MCF 10A (cell line): ENCODE measurements at regions of chr3 and their contacts with region 1.

Region 1: GRCh38 chr3:45688882-45689756 is at the start of gene SACM1L:
- DNase-seq: peak; percentile 98
- H3K4me3 Mint-ChIP-seq: peak within 1 kb of the TSS; percentile 74
- H3K27ac Mint-ChIP-seq: peak within 1 kb of the TSS; percentile 30
- H3K4me1 Mint-ChIP-seq: peaks cover 25% of the 10 kb centered on the region
- H3K27me3 Mint-ChIP-seq: no peaks in the 10 kb centered on the region
- CTCF ChIP-seq: no peak
- total RNA-seq, gene SACM1L: 39.3 and 44.5 TPM in 2 replicates

Region 2: GRCh38 chr3:45665101-45665572 is 24.0 kb before region 1 on chr3:
- CTCF ChIA-PET with region 1: interaction called, 11 read pairs
- POLR2A ChIA-PET with region 1: interaction called, 27 read pairs
- intact Hi-C with region 1: loop called (anchors 2 kb)
- DNase-seq: peak; percentile 81
- H3K4me3 Mint-ChIP-seq: no peak overlapping the region
- H3K27ac Mint-ChIP-seq: peak overlapping the region; percentile 50
- H3K4me1 Mint-ChIP-seq: peaks cover 22% of the 10 kb centered on the region
- H3K27me3 Mint-ChIP-seq: no peaks in the 10 kb centered on the region
- CTCF ChIP-seq: peak; percentile 39

Region 3: GRCh38 chr3:45677033-45677433 is 12.1 kb before region 1 on chr3:
- CTCF ChIA-PET with region 1: interaction called, 6 read pairs
- POLR2A ChIA-PET with region 1: interaction called, 73 read pairs
- intact Hi-C with region 1: loop called (anchors 1 kb)
- DNase-seq: peak; percentile 92
- H3K4me3 Mint-ChIP-seq: peak overlapping the region; percentile 50
- H3K27ac Mint-ChIP-seq: peak overlapping the region; percentile 83
- H3K4me1 Mint-ChIP-seq: peaks cover 18% of the 10 kb centered on the region
- H3K27me3 Mint-ChIP-seq: no peaks in the 10 kb centered on the region
- CTCF ChIP-seq: no peak

Region 4: DNA sequence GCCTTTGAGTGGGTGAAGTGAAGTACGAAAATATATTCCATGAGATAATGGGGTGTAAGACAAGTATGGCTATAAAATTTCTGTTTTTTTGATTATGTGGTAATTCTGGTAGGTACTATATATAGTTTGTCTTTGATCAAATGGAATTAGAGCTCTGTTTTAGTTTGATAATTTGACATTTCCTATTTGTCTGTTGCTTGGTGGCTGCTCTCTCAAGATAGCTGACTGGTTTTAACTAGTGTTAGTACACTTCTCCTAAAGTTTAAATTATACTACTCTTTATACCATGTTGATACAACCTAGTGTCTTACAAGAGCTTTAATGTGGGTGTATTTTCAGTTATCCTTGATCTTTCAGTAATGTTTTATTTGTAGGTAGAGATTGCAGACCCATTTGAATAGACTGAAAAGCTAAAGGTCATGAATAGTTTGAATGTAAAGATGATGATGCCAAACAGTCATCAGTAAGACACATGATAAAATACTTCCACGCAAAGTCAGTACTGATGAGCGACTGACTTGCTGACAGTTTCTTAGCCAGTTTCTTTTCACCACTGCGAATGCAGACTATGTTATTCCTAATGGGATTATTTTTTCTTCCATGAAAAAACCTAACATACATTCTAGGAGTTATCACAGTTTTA is 15.3 kb after region 1 on chr3:
- CTCF ChIA-PET with region 1: interaction called, 5 read pairs
- POLR2A ChIA-PET with region 1: interaction called, 13 read pairs
- intact Hi-C with region 1: no loop called
- DNase-seq: no peak
- H3K4me3 Mint-ChIP-seq: no peak overlapping the region
- H3K27ac Mint-ChIP-seq: no peak overlapping the region
- H3K4me1 Mint-ChIP-seq: peaks cover 10% of the 10 kb centered on the region
- H3K27me3 Mint-ChIP-seq: no peaks in the 10 kb centered on the region
- CTCF ChIP-seq: no peak

Region 5: GRCh38 chr3:45817831-45818522 is 128.9 kb after region 1 on chr3:
- CTCF ChIA-PET with region 1: no interaction called
- POLR2A ChIA-PET with region 1: interaction called, 18 read pairs
- intact Hi-C with region 1: no loop called
- DNase-seq: peak; percentile 97
- H3K4me3 Mint-ChIP-seq: no peak overlapping the region
- H3K27ac Mint-ChIP-seq: peak overlapping the region; percentile 73
- H3K4me1 Mint-ChIP-seq: peaks cover 28% of the 10 kb centered on the region
- H3K27me3 Mint-ChIP-seq: no peaks in the 10 kb centered on the region
- CTCF ChIP-seq: no peak

Region 6: DNA sequence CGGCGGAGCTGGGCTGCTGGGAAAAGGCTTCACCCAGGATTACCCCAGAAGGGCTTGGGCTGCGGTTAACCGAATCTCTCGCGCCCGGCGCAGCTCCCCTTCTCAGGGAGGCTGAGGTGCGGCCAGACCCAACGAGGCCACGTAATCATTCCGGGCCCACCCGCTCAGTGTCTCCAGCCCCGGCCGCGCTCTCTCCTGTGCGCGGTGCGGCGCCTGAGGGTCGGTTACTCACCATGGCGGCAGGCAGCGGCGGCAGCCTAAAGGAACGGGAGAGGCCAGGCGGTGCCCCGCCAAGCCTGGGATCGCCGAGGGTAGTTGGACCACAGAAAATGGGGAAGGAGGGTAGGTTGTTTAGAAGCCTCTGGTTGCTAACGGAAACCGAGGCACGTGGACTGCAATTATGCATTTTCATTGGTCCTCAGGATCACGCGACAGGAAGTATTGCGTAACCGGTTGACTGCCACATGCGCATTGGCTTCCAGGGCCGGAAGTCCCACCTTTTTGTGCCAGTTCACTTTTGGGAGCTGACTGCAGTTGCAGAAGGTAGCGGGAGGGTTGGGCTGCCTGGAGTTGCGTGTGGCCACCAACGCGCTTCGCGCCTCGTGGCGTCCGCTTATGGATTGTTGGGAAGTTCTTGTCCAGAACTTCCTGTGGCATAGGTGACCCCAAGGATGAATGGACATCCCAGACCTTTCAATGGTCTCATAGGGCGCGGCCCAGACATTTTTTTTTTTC is 152.8 kb after region 1 on chr3 and contains the start of gene LZTFL1:
- CTCF ChIA-PET with region 1: no interaction called
- POLR2A ChIA-PET with region 1: interaction called, 10 read pairs
- intact Hi-C with region 1: no loop called
- DNase-seq: peak; percentile 96
- H3K4me3 Mint-ChIP-seq: peak within 1 kb of the TSS; percentile 94
- H3K27ac Mint-ChIP-seq: peak within 1 kb of the TSS; percentile 98
- H3K4me1 Mint-ChIP-seq: peaks cover 25% of the 10 kb centered on the region
- H3K27me3 Mint-ChIP-seq: peaks cover 40% of the 10 kb centered on the region
- CTCF ChIP-seq: no peak
- total RNA-seq, gene LZTFL1: 30.5 and 39.5 TPM in 2 replicates

Region 7: GRCh38 chr3:46100812-46101211 is 411.7 kb after region 1 on chr3:
- CTCF ChIA-PET with region 1: no interaction called
- POLR2A ChIA-PET with region 1: no interaction called
- intact Hi-C with region 1: no loop called
- DNase-seq: no peak
- H3K4me3 Mint-ChIP-seq: no peak overlapping the region
- H3K27ac Mint-ChIP-seq: peak overlapping the region; percentile 51
- H3K4me1 Mint-ChIP-seq: peaks cover 18% of the 10 kb centered on the region
- H3K27me3 Mint-ChIP-seq: no peaks in the 10 kb centered on the region
- CTCF ChIP-seq: no peak